ENCODE measurements at regions of chr14 and their contacts with region 1.

Region 1: GRCh38 chr14:99304209-99304608 is 32.2 kb upstream of the BCL11B start:
- DNase-seq: no peak
- ATAC-seq: no peak
- H3K4me3 ChIP-seq: no peak overlapping the region
- H3K27ac ChIP-seq: no peak overlapping the region
- H3K4me1 ChIP-seq: no peaks in the 10 kb centered on the region
- H3K27me3 ChIP-seq: no peaks in the 10 kb centered on the region
- CTCF ChIP-seq: no peak
- EP300 ChIP-seq: no peak
- POLR2A ChIP-seq: no peak
- RAD21 ChIP-seq: no peak

Region 2: DNA sequence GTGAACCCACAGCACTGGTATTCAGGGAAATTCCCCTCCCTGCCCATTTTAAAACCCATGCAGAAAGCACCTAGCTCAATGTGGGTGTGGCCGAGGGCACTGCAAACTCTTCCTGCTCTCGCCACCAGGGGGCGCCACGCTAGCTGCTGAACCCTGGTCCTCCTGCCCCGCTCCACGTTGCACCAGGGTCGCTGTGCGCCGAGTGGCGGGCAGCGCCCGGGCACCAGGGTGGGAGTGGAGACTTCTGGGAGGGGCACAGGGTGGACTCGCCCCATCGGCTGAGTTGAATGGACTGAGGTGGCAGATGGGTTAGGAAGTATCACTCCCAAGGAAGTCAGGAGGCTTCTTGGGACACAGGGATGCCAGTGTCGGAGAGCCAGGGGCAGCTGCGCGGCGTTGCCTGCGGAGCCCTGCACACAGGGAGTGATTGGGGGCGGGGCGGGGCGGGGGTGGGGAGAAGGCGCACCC is 15.9 kb after region 1 on chr14:
- CTCF ChIA-PET with region 1: interaction called, 10 read pairs
- POLR2A ChIA-PET with region 1: no interaction called
- RAD21 ChIA-PET with region 1: no interaction called
- SMC1A ChIA-PET with region 1: interaction called, 3 read pairs
- in situ Hi-C with region 1: no loop called
- intact Hi-C with region 1: no loop called
- DNase-seq: peak; percentile 39
- ATAC-seq: peak; percentile 92
- H3K4me3 ChIP-seq: no peak overlapping the region
- H3K27ac ChIP-seq: no peak overlapping the region
- H3K4me1 ChIP-seq: peaks cover 6% of the 10 kb centered on the region
- H3K27me3 ChIP-seq: no peaks in the 10 kb centered on the region
- CTCF ChIP-seq: peak; percentile 79 to 92 (median 88)
- EP300 ChIP-seq: no peak
- POLR2A ChIP-seq: no peak
- RAD21 ChIP-seq: peak; percentile 33

Measured in GM12878 (cell line).